Calu3 (cell line): ENCODE measurements at regions of chr4 and their contacts with region 1.

Region 1: GRCh38 chr4:150818661-150819060 is 196.4 kb downstream of the LRBA start:
- DNase-seq: no peak
- H3K4me3 Mint-ChIP-seq: no peak overlapping the region
- H3K27ac Mint-ChIP-seq: no peak overlapping the region
- H3K4me1 Mint-ChIP-seq: no peaks in the 10 kb centered on the region
- H3K27me3 Mint-ChIP-seq: no peaks in the 10 kb centered on the region
- CTCF ChIP-seq: no peak

Region 2: DNA sequence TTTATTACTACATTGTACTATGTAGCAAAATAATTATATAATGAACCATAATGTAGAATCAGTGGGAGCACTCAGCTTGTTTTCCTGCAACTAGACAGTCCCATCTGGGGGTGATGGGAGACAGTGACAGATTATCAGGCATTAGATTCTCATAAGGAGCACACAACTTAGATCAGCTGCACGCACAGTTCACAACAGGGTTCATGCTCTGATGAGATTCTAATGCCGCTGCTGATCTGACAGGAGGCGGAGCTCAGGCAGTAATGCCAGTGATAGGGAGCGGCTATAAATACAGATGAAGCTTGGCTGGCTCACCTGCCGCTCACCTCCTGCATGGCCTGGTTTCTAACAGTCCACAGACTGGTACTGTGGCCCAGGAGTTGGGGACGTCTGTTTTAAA is 37.5 kb before region 1 on chr4:
- CTCF ChIA-PET with region 1: no interaction called
- intact Hi-C with region 1: no loop called
- DNase-seq: no peak
- H3K4me3 Mint-ChIP-seq: no peak overlapping the region
- H3K27ac Mint-ChIP-seq: no peak overlapping the region
- H3K4me1 Mint-ChIP-seq: no peaks in the 10 kb centered on the region
- H3K27me3 Mint-ChIP-seq: no peaks in the 10 kb centered on the region
- CTCF ChIP-seq: no peak

Region 3: GRCh38 chr4:150867148-150867547 is 48.5 kb after region 1 on chr4:
- CTCF ChIA-PET with region 1: no interaction called
- intact Hi-C with region 1: loop called (anchors 5 kb)
- DNase-seq: peak; percentile 39
- H3K4me3 Mint-ChIP-seq: no peak overlapping the region
- H3K27ac Mint-ChIP-seq: no peak overlapping the region
- H3K4me1 Mint-ChIP-seq: no peaks in the 10 kb centered on the region
- H3K27me3 Mint-ChIP-seq: no peaks in the 10 kb centered on the region
- CTCF ChIP-seq: no peak